IMR-90 (cell line): ENCODE measurements at regions of chr9 and their contacts with region 1.

Region 1: DNA sequence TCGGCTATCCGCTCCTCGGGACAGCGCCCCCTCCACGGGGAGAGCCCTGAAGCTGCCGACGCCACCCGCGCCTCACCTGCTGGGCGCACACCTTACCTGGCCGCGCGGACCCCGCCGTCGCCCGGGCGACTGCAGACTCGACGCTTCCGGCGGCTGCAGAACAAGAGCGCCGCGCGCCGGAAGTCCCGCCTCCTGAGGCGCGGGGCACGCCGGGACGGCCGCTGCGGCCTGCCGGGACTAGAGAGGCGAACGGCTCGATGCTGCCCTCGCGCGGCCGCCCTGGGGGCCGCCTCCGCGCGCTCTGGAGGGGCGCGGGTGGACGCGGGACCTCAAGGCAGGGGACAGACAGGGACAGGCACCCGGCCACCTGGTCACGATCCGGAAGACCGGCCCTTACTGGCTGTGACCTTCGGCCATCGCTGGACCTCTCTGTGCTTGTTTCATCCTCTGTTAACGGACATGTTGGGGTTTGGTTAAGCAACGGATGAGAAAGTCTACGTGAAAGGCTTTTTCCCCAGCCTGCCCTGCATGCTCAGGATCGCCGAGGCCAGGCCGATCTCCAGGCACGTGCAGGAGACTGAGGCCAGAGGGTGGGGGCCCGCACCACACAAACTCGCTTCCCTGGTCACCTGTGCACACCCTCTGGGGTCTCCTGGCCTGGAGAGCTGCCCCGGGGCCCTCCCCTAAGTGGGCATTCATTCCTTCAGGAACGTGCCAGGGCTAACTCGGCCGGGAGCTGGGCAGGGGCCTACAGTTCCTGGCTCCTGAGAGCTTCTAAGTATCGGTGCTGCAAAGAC is at the start of gene SNAPC4:
- DNase-seq: peak; percentile 78
- ATAC-seq: peak; percentile 96
- H3K4me3 ChIP-seq: peak within 1 kb of the TSS; percentile 76
- H3K27ac ChIP-seq: peak within 1 kb of the TSS; percentile 74
- H3K4me1 ChIP-seq: peaks cover 9% of the 10 kb centered on the region
- H3K27me3 ChIP-seq: no peaks in the 10 kb centered on the region
- CTCF ChIP-seq: peak; percentile 94
- POLR2A ChIP-seq: peak; percentile 71
- RAD21 ChIP-seq: peak; percentile 78
- total RNA-seq, gene SNAPC4: 2.5 and 3.1 TPM in 2 replicates

Region 2: GRCh38 chr9:136327313-136327974 is 72.8 kb before region 1 on chr9 and contains the start of gene GPSM1:
- CTCF ChIA-PET with region 1: no interaction called
- POLR2A ChIA-PET with region 1: no interaction called
- dilution Hi-C with region 1: no loop called
- in situ Hi-C with region 1: loop called (anchors 5 kb)
- intact Hi-C with region 1: loop called (anchors 5 kb)
- DNase-seq: peak; percentile 58
- ATAC-seq: peak; percentile 49
- H3K4me3 ChIP-seq: peak within 1 kb of the TSS; percentile 96
- H3K27ac ChIP-seq: peak within 1 kb of the TSS; percentile 97
- H3K4me1 ChIP-seq: peaks cover 35% of the 10 kb centered on the region
- H3K27me3 ChIP-seq: no peaks in the 10 kb centered on the region
- CTCF ChIP-seq: no peak
- POLR2A ChIP-seq: peak; percentile 89
- RAD21 ChIP-seq: no peak
- total RNA-seq, gene GPSM1: 28.7 and 29.7 TPM in 2 replicates

Region 3: GRCh38 chr9:136433108-136433668 is 33.0 kb after region 1 on chr9:
- CTCF ChIA-PET with region 1: no interaction called
- POLR2A ChIA-PET with region 1: no interaction called
- dilution Hi-C with region 1: no loop called
- in situ Hi-C with region 1: no loop called
- intact Hi-C with region 1: no loop called
- DNase-seq: no peak
- ATAC-seq: no peak
- H3K4me3 ChIP-seq: no peak overlapping the region
- H3K27ac ChIP-seq: no peak overlapping the region
- H3K4me1 ChIP-seq: peaks cover 4% of the 10 kb centered on the region; the same call in 1 of the 2 replicates
- H3K27me3 ChIP-seq: no peaks in the 10 kb centered on the region
- CTCF ChIP-seq: no peak
- POLR2A ChIP-seq: no peak
- RAD21 ChIP-seq: no peak